ENCODE measurements at regions of chr6 and their contacts with region 1.

Region 1: DNA sequence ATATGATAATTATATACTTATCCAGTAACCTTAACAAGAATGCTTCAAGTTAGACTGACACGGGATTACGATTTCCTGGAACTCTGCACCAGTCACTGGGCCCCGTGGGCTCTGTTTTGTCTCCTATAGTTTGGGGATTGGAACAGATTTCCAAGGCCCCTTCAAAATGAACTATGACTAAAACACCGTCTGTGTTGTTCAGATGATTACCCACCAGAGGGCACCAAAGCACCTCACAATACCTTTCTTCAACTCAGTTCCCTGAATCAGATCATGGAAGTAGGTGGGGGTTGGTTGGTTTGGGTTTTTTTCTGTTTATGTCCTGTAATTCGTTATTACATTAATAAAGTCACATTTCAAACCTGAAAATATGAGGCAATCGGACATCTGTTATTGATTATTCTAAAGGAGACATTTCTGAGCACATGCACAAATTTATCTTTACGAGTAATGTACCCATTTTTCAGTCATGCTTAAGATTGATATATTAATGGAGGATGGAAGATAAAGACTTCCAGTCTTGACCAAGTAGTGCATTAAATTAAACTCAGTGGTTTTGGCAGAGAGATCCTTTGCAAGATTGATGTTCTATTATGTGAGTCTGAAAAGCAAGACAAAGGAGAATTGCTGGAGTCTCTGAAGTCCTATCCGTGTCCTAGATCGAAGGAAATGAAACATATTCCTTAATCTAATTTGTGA is 112.0 kb upstream of the COL21A1 start:
- DNase-seq: peak; percentile 71
- H3K4me3 Mint-ChIP-seq: no peak overlapping the region
- H3K27ac Mint-ChIP-seq: no peak overlapping the region
- H3K4me1 Mint-ChIP-seq: peaks cover 6% of the 10 kb centered on the region
- H3K27me3 Mint-ChIP-seq: peaks cover 5% of the 10 kb centered on the region

Region 2: DNA sequence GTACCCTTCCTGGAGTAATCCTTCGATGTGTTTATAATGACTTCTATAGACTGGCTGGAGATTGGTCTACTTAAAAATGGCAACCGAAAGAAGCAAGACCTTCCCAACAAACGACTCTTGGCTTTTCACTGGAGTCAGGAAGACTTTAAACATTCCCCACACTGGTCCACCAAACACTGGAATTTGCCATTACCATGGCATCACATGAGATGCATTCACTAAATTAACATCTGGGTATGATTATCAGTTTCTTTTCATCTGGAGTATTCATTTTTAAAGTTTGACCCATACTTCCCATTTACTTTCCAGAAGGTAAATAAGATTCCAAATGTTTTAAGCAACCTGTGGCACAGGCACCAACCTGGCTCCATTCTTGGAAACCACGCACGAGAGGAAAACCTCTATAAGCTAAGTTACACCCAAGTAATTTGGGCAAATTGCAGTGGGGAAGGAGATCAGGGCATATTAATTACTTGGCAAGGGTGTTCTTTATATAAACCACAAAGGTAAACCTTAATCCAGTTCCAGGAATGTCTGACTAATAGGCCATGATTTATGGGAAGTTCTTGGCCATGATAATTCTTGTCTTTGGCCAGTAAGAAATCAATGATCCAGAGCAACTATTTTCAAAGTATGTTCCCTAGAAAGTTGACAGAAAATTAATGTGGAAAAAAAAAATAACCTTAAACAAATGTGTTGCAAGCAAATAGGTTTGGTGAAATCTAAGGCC is 78.0 kb after region 1 on chr6:
- CTCF ChIA-PET with region 1: no interaction called
- POLR2A ChIA-PET with region 1: no interaction called
- intact Hi-C with region 1: no loop called
- DNase-seq: no peak
- H3K4me3 Mint-ChIP-seq: no peak overlapping the region
- H3K27ac Mint-ChIP-seq: no peak overlapping the region
- H3K4me1 Mint-ChIP-seq: no peaks in the 10 kb centered on the region
- H3K27me3 Mint-ChIP-seq: peaks cover 4% of the 10 kb centered on the region

Region 3: DNA sequence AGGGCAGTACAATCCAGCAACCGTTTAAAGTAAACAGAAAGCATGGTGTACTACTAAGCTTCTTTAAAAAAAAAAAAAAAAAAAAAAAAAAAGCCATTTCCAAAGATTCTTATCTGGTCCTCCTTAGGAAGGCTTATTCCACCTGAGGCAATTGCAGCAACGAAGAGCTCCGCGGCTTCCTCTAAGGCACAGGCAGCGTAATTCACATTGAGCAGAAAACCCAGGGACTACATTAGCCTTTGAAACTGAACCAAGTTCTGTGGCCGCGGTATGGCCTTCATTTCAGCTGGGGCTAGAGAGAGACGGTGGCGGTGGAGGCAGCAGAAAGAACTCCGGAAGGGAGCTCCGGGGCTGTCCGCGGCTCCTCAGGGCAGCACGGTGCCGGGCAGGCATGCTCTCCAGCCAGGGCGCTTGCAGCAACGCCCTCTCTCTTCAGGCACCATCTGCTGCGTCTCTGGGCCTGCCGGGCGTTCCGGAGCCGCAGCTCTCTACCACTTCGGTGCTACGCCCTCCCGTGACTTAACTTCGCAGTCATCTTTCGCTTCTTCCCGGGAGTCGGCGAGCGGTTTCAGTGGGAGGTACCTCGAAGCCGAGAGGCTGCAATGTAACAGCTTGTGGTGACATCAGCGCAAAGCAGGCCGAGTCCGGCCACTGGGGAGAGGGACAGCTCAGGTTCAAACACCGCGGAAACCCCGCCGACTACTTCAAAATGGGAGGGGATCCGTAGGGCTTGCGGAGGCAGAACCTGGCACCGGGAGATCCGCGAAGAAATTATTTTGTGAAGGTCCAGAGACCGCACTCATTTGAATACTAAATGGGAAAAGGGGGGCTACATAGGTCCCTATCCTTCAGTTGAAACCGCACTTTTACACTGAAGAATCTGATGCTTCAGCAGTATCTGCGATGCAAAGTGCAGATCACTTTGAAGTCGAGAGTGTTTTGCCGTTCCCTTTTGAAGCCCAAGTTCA is 183.3 kb after region 1 on chr6:
- CTCF ChIA-PET with region 1: no interaction called
- POLR2A ChIA-PET with region 1: no interaction called
- intact Hi-C with region 1: loop called (anchors 2 kb)
- DNase-seq: peak; percentile 84
- H3K4me3 Mint-ChIP-seq: no peak overlapping the region
- H3K27ac Mint-ChIP-seq: no peak overlapping the region
- H3K4me1 Mint-ChIP-seq: no peaks in the 10 kb centered on the region
- H3K27me3 Mint-ChIP-seq: no peaks in the 10 kb centered on the region

Region 4: GRCh38 chr6:56570413-56571359 is 211.3 kb after region 1 on chr6:
- CTCF ChIA-PET with region 1: interaction called, 12 read pairs
- POLR2A ChIA-PET with region 1: no interaction called
- intact Hi-C with region 1: loop called (anchors 1 kb)
- DNase-seq: no peak
- H3K4me3 Mint-ChIP-seq: no peak overlapping the region
- H3K27ac Mint-ChIP-seq: no peak overlapping the region
- H3K4me1 Mint-ChIP-seq: no peaks in the 10 kb centered on the region
- H3K27me3 Mint-ChIP-seq: peaks cover 4% of the 10 kb centered on the region

Region 5: GRCh38 chr6:56699066-56699654 is 339.8 kb after region 1 on chr6:
- CTCF ChIA-PET with region 1: interaction called, 3 read pairs
- POLR2A ChIA-PET with region 1: no interaction called
- intact Hi-C with region 1: loop called (anchors 2 kb)
- DNase-seq: no peak
- H3K4me3 Mint-ChIP-seq: no peak overlapping the region
- H3K27ac Mint-ChIP-seq: no peak overlapping the region
- H3K4me1 Mint-ChIP-seq: no peaks in the 10 kb centered on the region
- H3K27me3 Mint-ChIP-seq: peaks cover 1% of the 10 kb centered on the region

Region 6: GRCh38 chr6:56843573-56844349 is 484.4 kb after region 1 on chr6:
- CTCF ChIA-PET with region 1: no interaction called
- POLR2A ChIA-PET with region 1: no interaction called
- intact Hi-C with region 1: loop called (anchors 2 kb)
- DNase-seq: peak; percentile 76
- H3K4me3 Mint-ChIP-seq: peak overlapping the region; percentile 70
- H3K27ac Mint-ChIP-seq: no peak overlapping the region
- H3K4me1 Mint-ChIP-seq: peaks cover 7% of the 10 kb centered on the region
- H3K27me3 Mint-ChIP-seq: peaks cover 37% of the 10 kb centered on the region